IMR-90 (cell line): ENCODE measurements at regions of chr22 and their contacts with region 1.

Region 1: GRCh38 chr22:40094485-40094884 is 83.2 kb upstream of the TNRC6B start:
- DNase-seq: peak; percentile 7
- ATAC-seq: peak; percentile 46; the same call in 1 of the 2 replicates
- H3K4me3 ChIP-seq: no peak overlapping the region
- H3K27ac ChIP-seq: no peak overlapping the region
- H3K4me1 ChIP-seq: no peaks in the 10 kb centered on the region
- H3K27me3 ChIP-seq: no peaks in the 10 kb centered on the region; the same call in 1 of the 2 replicates
- CTCF ChIP-seq: no peak
- POLR2A ChIP-seq: no peak
- RAD21 ChIP-seq: no peak

Region 2: DNA sequence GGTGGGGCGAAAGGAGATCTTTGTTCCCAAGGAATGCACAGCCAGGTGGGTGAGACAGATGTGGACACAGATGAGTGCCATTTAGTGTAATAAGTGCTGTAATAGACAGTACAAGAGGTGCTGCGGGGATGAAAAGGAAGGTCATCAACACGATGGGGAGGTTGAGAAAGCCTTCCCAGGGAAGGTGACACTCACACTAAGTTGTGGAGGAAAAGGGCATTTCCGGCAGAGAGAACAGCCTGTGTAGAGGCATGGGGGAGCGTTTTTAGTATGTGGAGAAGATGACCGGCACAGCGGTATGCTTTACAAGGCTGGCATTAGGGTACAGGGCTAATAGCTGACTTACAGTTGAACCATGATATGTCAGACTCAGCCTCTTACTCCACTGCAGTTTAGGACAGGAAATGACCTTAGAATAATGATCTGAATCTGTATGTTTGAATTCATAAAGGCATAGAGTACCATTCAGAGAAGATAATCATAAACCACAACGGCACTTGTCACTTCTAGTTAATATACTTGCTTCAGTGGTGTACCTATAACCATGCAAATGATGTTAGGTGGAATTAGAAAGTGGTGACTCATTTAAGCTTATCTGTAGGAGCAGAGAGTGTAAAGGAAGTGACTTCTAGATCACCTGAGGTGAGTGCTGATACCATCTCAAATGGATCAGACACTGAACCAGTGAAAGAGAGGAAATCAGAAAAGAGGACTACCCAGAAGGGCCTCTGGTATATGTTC is 39.2 kb before region 1 on chr22:
- CTCF ChIA-PET with region 1: no interaction called
- POLR2A ChIA-PET with region 1: no interaction called
- dilution Hi-C with region 1: no loop called
- in situ Hi-C with region 1: no loop called
- intact Hi-C with region 1: loop called (anchors 5 kb)
- DNase-seq: no peak
- ATAC-seq: no peak
- H3K4me3 ChIP-seq: no peak overlapping the region
- H3K27ac ChIP-seq: no peak overlapping the region
- H3K4me1 ChIP-seq: no peaks in the 10 kb centered on the region; the same call in 1 of the 2 replicates
- H3K27me3 ChIP-seq: no peaks in the 10 kb centered on the region
- CTCF ChIP-seq: no peak
- POLR2A ChIP-seq: no peak
- RAD21 ChIP-seq: no peak

Region 3: GRCh38 chr22:40147388-40148176 is 53.1 kb after region 1 on chr22:
- CTCF ChIA-PET with region 1: no interaction called
- POLR2A ChIA-PET with region 1: no interaction called
- dilution Hi-C with region 1: no loop called
- in situ Hi-C with region 1: no loop called
- intact Hi-C with region 1: no loop called
- DNase-seq: no peak
- ATAC-seq: no peak
- H3K4me3 ChIP-seq: no peak overlapping the region
- H3K27ac ChIP-seq: no peak overlapping the region
- H3K4me1 ChIP-seq: no peaks in the 10 kb centered on the region
- H3K27me3 ChIP-seq: no peaks in the 10 kb centered on the region
- CTCF ChIP-seq: no peak
- POLR2A ChIP-seq: no peak
- RAD21 ChIP-seq: no peak